Left cardiac atrium (tissue), 4 donors: ENCODE measurements at regions of chr18 and their contacts with region 1.

Region 1: GRCh38 chr18:57630002-57630753 is 8.5 kb upstream of the NARS1 start:
- DNase-seq: peak; percentile 99
- ATAC-seq: peak; percentile 98 to 99

Region 2: GRCh38 chr18:57803103-57803969 is 173.2 kb after region 1 on chr18 and contains the start of gene ATP8B1:
- intact Hi-C with region 1: loop called in 1 of 2 experiments (anchors 10 kb)
- DNase-seq: peak; percentile 82
- ATAC-seq: peak; percentile 85 to 93
- total RNA-seq, gene ATP8B1: 6.4 to 14.9 TPM